ENCODE measurements at regions of chr6 and their contacts with region 1.

Region 1: DNA sequence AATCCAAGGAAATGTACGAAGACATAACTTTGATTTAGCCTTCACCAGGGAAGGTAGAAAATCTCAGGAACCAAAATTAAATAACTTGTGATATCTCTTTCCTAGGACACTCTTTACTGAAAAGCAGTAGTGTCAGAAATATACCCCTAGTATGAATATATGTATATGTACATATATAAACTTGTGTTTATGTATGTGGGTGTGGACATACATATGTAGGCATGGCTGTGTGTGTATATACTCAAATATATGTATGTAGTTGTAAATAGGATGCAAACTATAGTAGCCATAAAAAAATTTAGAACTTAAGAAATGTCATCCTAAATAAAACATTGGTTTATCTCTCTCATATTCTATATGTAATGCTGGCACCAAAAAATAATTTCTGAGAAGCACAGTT is 500.8 kb downstream of the ADGRB3 start:
- DNase-seq: no peak
- ATAC-seq: no peak
- H3K4me3 ChIP-seq: no peak overlapping the region
- H3K27ac ChIP-seq: no peak overlapping the region
- H3K4me1 ChIP-seq: no peaks in the 10 kb centered on the region
- H3K27me3 ChIP-seq: no peaks in the 10 kb centered on the region
- CTCF ChIP-seq: no peak
- POLR2A ChIP-seq: no peak

Region 2: DNA sequence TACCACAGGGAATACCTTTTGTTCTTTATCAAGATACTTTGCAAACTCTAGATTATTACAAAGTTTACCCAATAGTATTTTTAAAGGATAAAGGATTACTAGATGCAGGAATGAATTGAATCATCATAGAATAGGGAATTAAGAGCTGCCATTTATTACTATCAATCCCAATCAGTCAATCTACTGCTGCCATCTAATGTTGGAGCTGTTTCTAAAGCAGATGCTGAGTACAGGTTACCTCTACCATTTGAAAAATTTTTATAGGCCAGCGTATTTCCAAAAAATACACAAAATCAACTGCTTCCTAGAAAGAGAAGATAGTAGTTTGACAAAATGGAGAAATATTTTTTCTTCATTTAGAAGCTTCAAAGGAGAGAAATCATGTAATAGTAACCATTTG is 19.5 kb after region 1 on chr6:
- in situ Hi-C with region 1: no loop called
- intact Hi-C with region 1: loop called (anchors 1 kb)
- DNase-seq: no peak
- ATAC-seq: no peak
- H3K4me3 ChIP-seq: no peak overlapping the region
- H3K27ac ChIP-seq: no peak overlapping the region
- H3K4me1 ChIP-seq: no peaks in the 10 kb centered on the region
- H3K27me3 ChIP-seq: no peaks in the 10 kb centered on the region
- CTCF ChIP-seq: no peak
- POLR2A ChIP-seq: no peak